Psoas muscle (tissue), 8 donors: ENCODE measurements at regions of chr1 and their contacts with region 1.

Region 1: GRCh38 chr1:100132566-100133477 is at the starts of genes SASS6 and TRMT13:
- DNase-seq: peak; percentile 97 to 98
- ATAC-seq: peak; percentile 98 to 100 (median 99)
- H3K4me3 ChIP-seq: peak within 1 kb of the TSS; percentile 92
- H3K27ac ChIP-seq: peak within 1 kb of the TSS; percentile 87
- H3K4me1 ChIP-seq: peaks cover 30% of the 10 kb centered on the region
- H3K27me3 ChIP-seq: no peaks in the 10 kb centered on the region
- CTCF ChIP-seq: no peak
- total RNA-seq, gene SASS6: 1.1 to 1.5 (median 1.3) TPM
- total RNA-seq, gene TRMT13: 4.9 to 12.4 (median 8.6) TPM

Region 2: DNA sequence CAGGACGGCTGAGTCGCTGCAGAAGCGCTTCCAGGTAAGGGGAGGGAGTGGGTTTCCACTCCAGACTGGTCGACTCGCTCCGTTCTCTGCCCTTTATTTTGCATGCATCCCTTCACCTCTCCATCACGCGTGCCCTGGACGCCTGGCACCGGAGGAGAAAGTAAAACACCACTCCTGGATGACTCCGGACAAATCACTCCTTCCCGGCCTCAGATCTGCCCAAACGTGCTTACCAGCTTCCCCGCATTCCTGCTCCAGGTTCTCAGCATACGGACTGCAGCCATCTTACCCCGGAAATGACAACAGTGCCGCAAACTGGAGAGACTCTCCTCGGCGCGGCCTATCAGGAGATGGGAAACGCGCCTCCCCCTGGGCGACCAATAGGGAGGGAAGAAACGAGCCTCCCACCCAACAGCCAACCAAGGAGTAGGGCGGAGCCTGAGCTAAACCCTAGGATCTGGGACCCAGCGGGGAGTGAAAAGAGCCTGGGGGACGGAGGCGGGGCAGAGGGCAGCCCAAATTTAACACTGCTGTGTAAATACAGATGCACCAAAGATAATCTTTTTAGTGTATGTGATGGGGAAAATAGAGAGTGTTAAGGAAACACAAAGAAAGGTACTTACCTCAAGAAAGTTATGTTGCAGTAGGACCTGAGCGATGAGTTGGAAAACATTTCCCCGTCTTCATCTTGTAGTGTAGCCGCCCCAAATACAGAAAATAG is 116.9 kb after region 1 on chr1 and contains the start of gene DBT:
- intact Hi-C with region 1: loop called in 1 of 2 experiments (anchors 5 kb)
- DNase-seq: peak; percentile 94 to 97
- ATAC-seq: peak; percentile 100
- H3K4me3 ChIP-seq: peak within 1 kb of the TSS; percentile 85
- H3K27ac ChIP-seq: peak within 1 kb of the TSS; percentile 93
- H3K4me1 ChIP-seq: peaks cover 14% of the 10 kb centered on the region
- H3K27me3 ChIP-seq: no peaks in the 10 kb centered on the region
- CTCF ChIP-seq: no peak
- total RNA-seq, gene DBT: 16.1 to 28.2 (median 19.0) TPM

Region 3: DNA sequence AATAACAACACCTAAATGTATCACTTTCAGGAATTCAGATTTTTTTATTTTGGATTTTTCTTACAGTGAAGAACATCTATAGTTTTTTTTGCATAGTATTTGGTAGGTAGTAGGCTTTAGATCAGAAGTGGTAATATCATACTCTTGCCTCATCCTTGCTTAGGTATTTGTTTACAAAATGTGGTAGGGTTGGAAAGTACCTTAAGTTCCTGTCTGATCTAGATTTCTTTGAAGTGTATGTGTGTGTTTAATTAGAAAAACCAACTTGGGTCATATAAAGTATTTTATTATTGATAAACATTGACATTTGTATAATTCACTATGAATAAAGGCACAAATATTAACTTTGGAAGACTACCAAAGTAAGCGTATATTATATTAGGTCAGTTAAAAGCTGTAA is 319.8 kb after region 1 on chr1:
- intact Hi-C with region 1: loop called in 1 of 2 experiments (anchors 5 kb)
- DNase-seq: no peak
- ATAC-seq: peak in 1 of 4 donors; percentile 75
- H3K4me3 ChIP-seq: no peak overlapping the region
- H3K27ac ChIP-seq: no peak overlapping the region
- H3K4me1 ChIP-seq: peaks cover 9% of the 10 kb centered on the region
- H3K27me3 ChIP-seq: no peaks in the 10 kb centered on the region
- CTCF ChIP-seq: no peak